IMR-90 (cell line): ENCODE measurements at regions of chr9 and their contacts with region 1.

Region 1: GRCh38 chr9:90972057-90972456 is 170.4 kb downstream of the SYK start:
- DNase-seq: no peak
- ATAC-seq: no peak
- H3K4me3 ChIP-seq: no peak overlapping the region
- H3K27ac ChIP-seq: no peak overlapping the region
- H3K4me1 ChIP-seq: peaks cover 2% of the 10 kb centered on the region; the same call in 1 of the 2 replicates
- H3K27me3 ChIP-seq: no peaks in the 10 kb centered on the region
- CTCF ChIP-seq: no peak
- POLR2A ChIP-seq: no peak
- RAD21 ChIP-seq: no peak

Region 2: GRCh38 chr9:90579181-90579580 is 392.9 kb before region 1 on chr9:
- CTCF ChIA-PET with region 1: no interaction called
- POLR2A ChIA-PET with region 1: no interaction called
- dilution Hi-C with region 1: no loop called
- in situ Hi-C with region 1: no loop called
- intact Hi-C with region 1: no loop called
- DNase-seq: no peak
- ATAC-seq: no peak
- H3K4me3 ChIP-seq: no peak overlapping the region
- H3K27ac ChIP-seq: no peak overlapping the region
- H3K4me1 ChIP-seq: no peaks in the 10 kb centered on the region
- H3K27me3 ChIP-seq: no peaks in the 10 kb centered on the region
- CTCF ChIP-seq: no peak
- POLR2A ChIP-seq: no peak
- RAD21 ChIP-seq: no peak

Region 3: GRCh38 chr9:90830977-90831376 is 141.1 kb before region 1 on chr9:
- CTCF ChIA-PET with region 1: no interaction called
- POLR2A ChIA-PET with region 1: no interaction called
- dilution Hi-C with region 1: no loop called
- in situ Hi-C with region 1: no loop called
- intact Hi-C with region 1: no loop called
- DNase-seq: no peak
- ATAC-seq: no peak
- H3K4me3 ChIP-seq: no peak overlapping the region
- H3K27ac ChIP-seq: no peak overlapping the region
- H3K4me1 ChIP-seq: no peaks in the 10 kb centered on the region
- H3K27me3 ChIP-seq: peaks cover 4% of the 10 kb centered on the region; the same call in 1 of the 2 replicates
- CTCF ChIP-seq: no peak
- POLR2A ChIP-seq: no peak
- RAD21 ChIP-seq: no peak

Region 4: GRCh38 chr9:91023741-91024140 is 51.7 kb after region 1 on chr9:
- CTCF ChIA-PET with region 1: no interaction called
- POLR2A ChIA-PET with region 1: no interaction called
- dilution Hi-C with region 1: no loop called
- in situ Hi-C with region 1: no loop called
- intact Hi-C with region 1: loop called (anchors 5 kb)
- DNase-seq: no peak
- ATAC-seq: no peak
- H3K4me3 ChIP-seq: no peak overlapping the region
- H3K27ac ChIP-seq: no peak overlapping the region
- H3K4me1 ChIP-seq: no peaks in the 10 kb centered on the region
- H3K27me3 ChIP-seq: no peaks in the 10 kb centered on the region
- CTCF ChIP-seq: no peak
- POLR2A ChIP-seq: no peak
- RAD21 ChIP-seq: no peak